ENCODE measurements at regions of chr11 and their contacts with region 1.

Region 1: GRCh38 chr11:74398244-74399159 is at the start of gene PGM2L1:
- DNase-seq: peak; percentile 89
- H3K4me3 Mint-ChIP-seq: peak within 1 kb of the TSS; percentile 99
- H3K27ac Mint-ChIP-seq: peak within 1 kb of the TSS; percentile 100
- H3K4me1 Mint-ChIP-seq: peaks cover 30% of the 10 kb centered on the region
- H3K27me3 Mint-ChIP-seq: no peaks in the 10 kb centered on the region
- total RNA-seq, gene PGM2L1: 17.1 and 18.2 TPM in 2 replicates

Region 2: GRCh38 chr11:73982969-73983740 is 415.3 kb before region 1 on chr11:
- intact Hi-C with region 1: loop called (anchors 5 kb)
- DNase-seq: peak; percentile 94
- H3K4me3 Mint-ChIP-seq: peak overlapping the region; percentile 100
- H3K27ac Mint-ChIP-seq: peak overlapping the region; percentile 97
- H3K4me1 Mint-ChIP-seq: peaks cover 39% of the 10 kb centered on the region
- H3K27me3 Mint-ChIP-seq: no peaks in the 10 kb centered on the region

Region 3: DNA sequence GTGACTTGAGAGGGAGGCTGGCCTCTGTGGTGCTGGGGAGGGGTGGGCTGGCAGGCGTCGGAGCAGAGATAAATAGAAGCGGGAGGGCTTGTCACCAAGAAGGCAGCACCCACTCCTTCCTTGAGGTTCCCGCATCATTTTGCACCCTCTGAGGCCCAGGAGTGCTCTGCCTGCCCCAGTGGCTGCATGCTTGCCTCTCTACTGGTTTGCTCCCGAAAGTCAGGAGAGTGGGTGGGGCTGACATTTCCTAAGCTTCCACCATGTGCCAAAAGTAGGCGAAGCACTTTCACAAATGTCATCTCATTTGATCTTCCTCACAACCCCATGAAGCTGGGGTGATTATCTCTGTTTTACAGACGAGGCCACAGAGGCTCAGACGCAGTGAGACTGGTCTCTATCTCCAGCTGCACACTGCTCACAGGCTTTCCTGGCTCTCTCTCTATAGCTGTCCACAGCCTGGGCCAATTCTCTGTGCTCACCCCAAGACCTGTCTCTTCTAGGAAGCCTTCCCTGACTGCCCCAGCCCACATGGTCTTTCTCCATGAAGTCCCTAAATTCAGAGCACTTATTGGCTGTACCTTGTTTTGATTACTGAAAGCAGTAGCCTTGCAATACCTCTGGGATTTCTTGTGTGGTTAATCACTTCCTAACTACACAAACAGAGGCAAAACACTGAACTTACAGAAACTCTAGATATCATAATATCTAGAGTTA is 387.0 kb before region 1 on chr11:
- intact Hi-C with region 1: loop called (anchors 10 kb)
- DNase-seq: peak; percentile 52
- H3K4me3 Mint-ChIP-seq: peak overlapping the region; percentile 7
- H3K27ac Mint-ChIP-seq: peak overlapping the region; percentile 99
- H3K4me1 Mint-ChIP-seq: peaks cover 78% of the 10 kb centered on the region
- H3K27me3 Mint-ChIP-seq: no peaks in the 10 kb centered on the region

Region 4: DNA sequence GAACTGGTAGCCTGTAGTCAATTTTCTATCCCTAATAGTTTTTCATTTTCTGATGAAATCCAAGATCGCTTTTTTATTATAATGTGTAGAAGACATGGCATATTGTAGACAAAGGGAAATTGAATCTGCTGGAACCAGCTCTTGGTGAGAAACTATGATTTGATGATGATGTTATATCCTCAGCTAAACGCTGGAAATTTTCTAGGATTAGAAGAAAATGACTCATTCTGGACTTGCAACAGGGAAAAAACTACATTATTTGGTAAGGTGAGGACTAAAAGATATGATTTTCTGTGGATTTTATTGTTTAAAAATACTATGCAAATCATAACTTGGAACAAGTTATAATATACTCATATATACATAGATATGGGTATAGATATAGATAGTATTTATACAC is 13.8 kb after region 1 on chr11:
- intact Hi-C with region 1: loop called (anchors 2 kb)
- DNase-seq: no peak
- H3K4me3 Mint-ChIP-seq: no peak overlapping the region
- H3K27ac Mint-ChIP-seq: peak overlapping the region; percentile 63
- H3K4me1 Mint-ChIP-seq: peaks cover 20% of the 10 kb centered on the region
- H3K27me3 Mint-ChIP-seq: peaks cover 5% of the 10 kb centered on the region

Region 5: GRCh38 chr11:74418509-74418895 is 20.0 kb after region 1 on chr11:
- intact Hi-C with region 1: loop called (anchors 1 kb)
- DNase-seq: no peak
- H3K4me3 Mint-ChIP-seq: no peak overlapping the region
- H3K27ac Mint-ChIP-seq: peak overlapping the region; percentile 82
- H3K4me1 Mint-ChIP-seq: peaks cover 21% of the 10 kb centered on the region
- H3K27me3 Mint-ChIP-seq: peaks cover 2% of the 10 kb centered on the region

Region 6: GRCh38 chr11:74492974-74493790 is 94.7 kb after region 1 on chr11 and contains the start of gene LIPT2:
- intact Hi-C with region 1: loop called (anchors 1 kb)
- DNase-seq: peak; percentile 95
- H3K4me3 Mint-ChIP-seq: peak within 1 kb of the TSS; percentile 85
- H3K27ac Mint-ChIP-seq: peak within 1 kb of the TSS; percentile 78
- H3K4me1 Mint-ChIP-seq: peaks cover 16% of the 10 kb centered on the region
- H3K27me3 Mint-ChIP-seq: peaks cover 14% of the 10 kb centered on the region
- total RNA-seq, gene LIPT2: 5.3 and 5.7 TPM in 2 replicates

Region 7: DNA sequence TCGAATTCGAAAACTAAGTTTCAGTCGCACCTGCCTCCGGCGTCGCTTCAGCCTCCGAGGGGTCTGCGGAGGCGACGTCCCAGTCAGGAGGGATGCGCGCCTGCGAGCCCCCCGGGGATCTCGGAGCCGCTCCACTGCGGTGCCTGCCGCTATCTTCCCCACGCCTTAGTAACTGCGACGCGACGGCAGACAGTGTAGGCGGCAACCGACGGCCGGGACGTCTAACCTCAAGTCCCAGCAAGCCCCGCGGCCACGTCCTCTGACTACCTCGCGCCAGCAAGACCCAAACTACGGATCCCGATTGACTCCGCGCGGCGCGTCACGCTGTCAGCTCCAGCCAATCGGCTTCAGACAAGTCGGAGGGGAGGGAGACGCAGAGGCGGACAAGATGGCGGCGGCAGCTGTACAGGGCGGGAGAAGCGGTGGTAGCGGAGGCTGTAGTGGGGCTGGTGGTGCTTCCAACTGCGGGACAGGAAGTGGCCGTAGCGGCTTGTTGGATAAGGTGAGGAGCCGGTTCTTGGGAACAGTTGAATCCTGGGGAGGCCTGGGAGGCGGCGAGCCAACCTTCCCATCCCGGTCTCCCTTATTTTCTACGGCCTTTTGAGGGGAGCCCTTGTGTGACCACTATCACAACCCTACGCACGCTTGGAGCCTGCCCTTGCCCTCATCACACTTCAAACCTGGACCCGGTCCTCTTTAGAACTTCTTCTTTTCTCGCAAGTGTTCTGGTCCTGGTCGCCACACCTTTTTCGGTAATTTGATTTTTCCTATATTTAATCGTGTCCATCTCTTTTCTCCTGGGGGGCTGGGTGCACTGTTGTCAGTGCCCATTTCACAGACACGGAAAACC is 550.6 kb after region 1 on chr11 and contains the starts of genes SPCS2 and XRRA1:
- intact Hi-C with region 1: loop called (anchors 10 kb)
- DNase-seq: peak; percentile 98
- H3K4me3 Mint-ChIP-seq: peak within 1 kb of the TSS; percentile 95
- H3K27ac Mint-ChIP-seq: peak within 1 kb of the TSS; percentile 94
- H3K4me1 Mint-ChIP-seq: peaks cover 38% of the 10 kb centered on the region
- H3K27me3 Mint-ChIP-seq: no peaks in the 10 kb centered on the region
- total RNA-seq, gene SPCS2: 169 and 173 TPM in 2 replicates
- total RNA-seq, gene XRRA1: 9.9 and 10.7 TPM in 2 replicates

Region 8: GRCh38 chr11:75233742-75234172 is 835.3 kb after region 1 on chr11:
- intact Hi-C with region 1: no loop called
- DNase-seq: no peak
- H3K4me3 Mint-ChIP-seq: no peak overlapping the region
- H3K27ac Mint-ChIP-seq: no peak overlapping the region
- H3K4me1 Mint-ChIP-seq: no peaks in the 10 kb centered on the region
- H3K27me3 Mint-ChIP-seq: peaks cover 6% of the 10 kb centered on the region

Measured in activated T-helper 2 cell treated with anti-CD3 and anti-CD28 coated beads, Interferon-gamma antibody, Interleukin-2, Interleukin-4, amounts not matched to agents 10 μg/mL and 5 μg/mL and 100 μg/mL, durations not matched to agents 14 hours and 24 hours and 36 hours (primary cell).